Left ventricle myocardium inferior (tissue), 1 donor: ENCODE measurements at regions of chr4 and their contacts with region 1.

Region 1: GRCh38 chr4:75724066-75724866 is at the start of gene USO1:
- DNase-seq: peak; percentile 99
- H3K4me3 ChIP-seq: peak within 1 kb of the TSS; percentile 92
- H3K27ac ChIP-seq: peak within 1 kb of the TSS; percentile 97
- H3K4me1 ChIP-seq: peaks cover 69% of the 10 kb centered on the region
- H3K27me3 ChIP-seq: no peaks in the 10 kb centered on the region
- CTCF ChIP-seq: peak; percentile 74
- total RNA-seq, gene USO1: 84.3 TPM

Region 2: GRCh38 chr4:75180790-75181776 is 543.2 kb before region 1 on chr4:
- intact Hi-C with region 1: no loop called
- DNase-seq: no peak
- H3K4me3 ChIP-seq: no peak overlapping the region
- H3K27ac ChIP-seq: no peak overlapping the region
- H3K4me1 ChIP-seq: no peaks in the 10 kb centered on the region
- H3K27me3 ChIP-seq: peaks cover 6% of the 10 kb centered on the region
- CTCF ChIP-seq: no peak

Region 3: DNA sequence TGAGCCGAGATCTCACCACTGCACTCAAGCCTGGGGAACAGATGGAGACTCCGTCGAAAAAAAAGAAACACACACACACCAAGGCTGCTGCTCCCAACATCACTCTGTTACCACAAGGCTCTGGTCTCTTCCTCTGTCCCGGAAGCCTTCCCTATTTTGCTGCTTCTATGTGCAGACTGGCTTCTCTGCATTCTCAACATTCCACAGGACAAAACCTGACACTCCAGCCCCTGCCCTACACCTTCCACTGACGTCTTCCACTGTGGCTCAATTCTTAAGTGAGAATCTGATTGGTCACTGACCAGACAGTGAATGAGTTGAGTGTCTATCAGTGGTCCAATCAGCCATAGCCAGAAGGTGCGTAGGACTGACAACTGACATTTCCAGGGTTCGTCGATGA is 162.5 kb before region 1 on chr4:
- intact Hi-C with region 1: no loop called
- DNase-seq: no peak
- H3K4me3 ChIP-seq: no peak overlapping the region
- H3K27ac ChIP-seq: no peak overlapping the region
- H3K4me1 ChIP-seq: no peaks in the 10 kb centered on the region
- H3K27me3 ChIP-seq: peaks cover 29% of the 10 kb centered on the region
- CTCF ChIP-seq: no peak

Region 4: DNA sequence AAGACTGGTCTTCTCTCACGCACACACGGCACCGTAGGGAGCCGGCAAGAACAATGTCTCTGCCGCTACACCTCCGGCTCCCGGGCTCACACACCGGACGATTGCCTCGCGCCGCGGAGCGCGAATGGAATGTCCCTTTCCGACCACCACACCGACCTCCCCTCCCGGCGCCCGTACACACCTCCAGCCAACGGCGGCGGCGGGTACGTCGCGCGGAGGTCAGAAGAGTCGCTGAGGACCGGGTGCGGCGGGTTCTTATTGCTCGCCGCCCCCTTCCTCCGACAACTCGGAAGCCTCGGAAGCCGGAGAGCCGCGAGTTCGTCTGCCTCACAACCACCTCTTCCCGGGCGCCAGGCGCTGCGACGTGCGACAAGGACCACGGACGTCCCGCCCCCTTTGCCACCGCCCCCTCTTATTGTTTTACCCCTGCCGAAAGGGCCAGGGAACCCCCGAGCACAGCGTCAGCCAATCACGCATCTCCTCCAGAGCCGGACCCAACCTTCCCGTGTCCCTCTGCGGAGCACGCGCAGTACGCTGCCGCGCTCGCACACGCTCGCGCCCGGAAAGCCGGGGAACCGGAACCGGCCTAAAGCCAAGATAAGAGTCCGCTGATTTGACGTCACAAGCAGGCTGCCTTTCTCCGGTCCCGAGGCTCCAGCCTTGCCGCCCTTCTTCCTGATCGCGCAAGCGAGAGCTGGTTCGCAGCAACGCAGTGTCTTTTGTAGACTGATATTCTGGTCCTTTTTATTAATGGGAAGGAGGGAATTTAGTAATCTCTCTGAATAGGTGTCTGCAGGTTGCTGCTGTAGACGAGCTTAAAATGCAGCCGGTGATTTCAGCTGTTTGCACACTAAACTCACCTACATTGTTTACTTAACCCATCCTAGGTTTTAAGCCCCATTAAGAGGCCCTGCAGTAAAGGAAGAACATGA is 51.0 kb before region 1 on chr4 and contains the start of gene G3BP2:
- intact Hi-C with region 1: loop called (anchors 5 kb)
- DNase-seq: peak; percentile 98
- H3K4me3 ChIP-seq: peak within 1 kb of the TSS; percentile 97
- H3K27ac ChIP-seq: peak within 1 kb of the TSS; percentile 96
- H3K4me1 ChIP-seq: peaks cover 56% of the 10 kb centered on the region
- H3K27me3 ChIP-seq: no peaks in the 10 kb centered on the region
- CTCF ChIP-seq: no peak
- total RNA-seq, gene G3BP2: 71.2 TPM